ENCODE measurements at regions of chr7 and their contacts with region 1.

Region 1: DNA sequence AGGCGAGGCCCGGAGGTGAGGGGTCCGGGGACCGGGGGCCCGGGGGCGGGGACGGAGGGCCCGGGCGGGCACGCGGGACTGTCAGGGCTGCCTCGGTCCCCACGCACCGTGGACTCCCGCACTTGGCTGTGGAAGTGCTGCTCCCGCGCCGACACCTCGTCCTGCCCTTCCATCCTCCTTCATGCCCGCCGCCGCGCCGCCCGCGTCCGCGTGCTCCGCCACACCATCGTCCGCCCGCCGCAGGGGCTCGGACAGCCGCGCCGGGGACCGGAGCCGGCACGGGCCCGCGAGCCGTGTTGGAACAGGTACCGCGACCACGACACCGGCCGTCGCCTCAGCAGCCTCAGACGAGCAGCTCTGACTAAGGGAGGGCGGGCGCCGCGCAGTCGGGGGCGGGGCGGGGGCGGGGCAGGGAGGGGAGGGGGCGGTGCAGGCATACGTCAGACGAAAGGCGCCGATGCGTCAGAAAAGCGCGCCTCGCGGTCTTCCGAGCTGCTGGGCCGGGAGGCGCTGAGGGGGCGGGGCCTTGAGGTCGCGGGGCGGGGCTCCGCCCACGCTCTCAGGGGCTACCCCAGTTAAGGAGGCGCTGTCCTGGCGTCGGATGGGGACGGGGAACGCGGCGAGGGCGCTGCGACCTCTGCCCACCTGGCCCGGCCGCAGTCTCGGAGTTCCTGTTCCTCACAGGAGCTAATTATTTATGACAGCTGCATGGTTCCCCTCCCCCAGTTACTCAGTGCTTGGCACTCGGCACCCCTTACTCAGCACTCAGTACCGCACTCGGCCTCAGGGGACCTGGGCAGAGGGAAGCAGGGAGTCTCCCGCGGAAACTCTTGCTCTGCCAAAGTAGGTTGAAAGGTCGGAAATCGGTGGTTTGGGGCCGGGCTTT is at the start of gene LMBR1:
- DNase-seq: peak; percentile 91
- H3K4me3 Mint-ChIP-seq: peak within 1 kb of the TSS; percentile 94
- H3K27ac Mint-ChIP-seq: peak within 1 kb of the TSS; percentile 93
- H3K4me1 Mint-ChIP-seq: peaks cover 46% of the 10 kb centered on the region
- H3K27me3 Mint-ChIP-seq: no peaks in the 10 kb centered on the region
- total RNA-seq, gene LMBR1: 60.5 and 61.7 TPM in 2 replicates

Region 2: DNA sequence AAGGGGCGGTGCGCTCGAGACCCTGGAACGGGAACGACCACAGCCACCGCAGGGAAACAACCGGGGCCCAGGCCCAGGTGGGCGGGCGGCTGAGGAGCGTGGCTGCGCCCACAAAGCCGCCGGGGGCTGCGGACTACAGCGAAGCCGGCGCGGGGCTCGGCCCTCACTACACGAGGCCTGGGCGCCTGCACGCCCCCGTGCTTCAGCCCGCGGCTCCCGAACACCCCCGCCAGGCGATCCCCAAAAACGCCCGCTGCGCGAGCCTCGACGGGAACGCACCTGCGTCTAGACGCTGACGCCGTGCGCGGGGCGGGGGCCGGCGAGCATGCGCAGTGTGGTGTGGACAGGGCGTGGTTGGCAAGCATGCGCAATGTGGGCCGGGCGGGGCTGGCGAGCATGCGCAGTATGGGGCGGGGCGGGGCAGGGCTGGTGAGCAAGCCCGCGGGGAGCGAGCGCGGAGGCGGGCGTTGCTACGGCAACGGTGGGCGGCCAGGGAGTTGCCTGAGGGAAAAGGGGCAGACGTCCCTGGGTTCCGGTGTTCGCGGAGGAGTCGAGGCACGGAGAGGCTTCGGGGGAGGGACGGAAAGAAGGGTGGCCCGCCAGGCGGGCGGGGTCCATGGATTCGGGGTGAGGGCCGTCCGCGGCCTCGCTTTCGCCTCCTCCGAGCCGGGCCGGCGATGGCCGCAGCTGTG is 252.7 kb before region 1 on chr7 and contains the start of gene RNF32:
- intact Hi-C with region 1: loop called (anchors 2 kb)
- DNase-seq: peak; percentile 95
- H3K4me3 Mint-ChIP-seq: peak within 1 kb of the TSS; percentile 97
- H3K27ac Mint-ChIP-seq: peak within 1 kb of the TSS; percentile 100
- H3K4me1 Mint-ChIP-seq: peaks cover 36% of the 10 kb centered on the region
- H3K27me3 Mint-ChIP-seq: no peaks in the 10 kb centered on the region
- total RNA-seq, gene RNF32: 2.9 and 3.4 TPM in 2 replicates

Region 3: DNA sequence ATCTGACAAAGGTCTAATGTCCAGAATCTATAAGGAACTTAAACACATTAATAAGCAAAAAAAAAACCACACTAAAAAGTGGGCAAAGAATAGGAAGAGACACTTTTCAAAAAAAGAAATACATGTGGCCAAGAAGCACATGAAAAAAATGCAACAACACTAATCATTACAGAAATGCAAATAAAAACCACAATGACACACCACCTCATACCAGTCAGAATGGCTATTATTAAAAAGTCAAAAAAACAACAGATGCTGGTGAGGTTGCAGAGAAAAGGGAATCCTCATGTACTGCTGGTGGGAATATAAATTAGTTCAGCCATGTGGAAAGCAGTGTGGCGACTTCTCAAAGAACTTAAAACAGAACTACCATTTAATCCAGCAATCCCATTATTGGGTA is 119.1 kb before region 1 on chr7:
- intact Hi-C with region 1: loop called (anchors 1 kb)
- DNase-seq: no peak
- H3K4me3 Mint-ChIP-seq: no peak overlapping the region
- H3K27ac Mint-ChIP-seq: peak overlapping the region; percentile 73
- H3K4me1 Mint-ChIP-seq: peaks cover 61% of the 10 kb centered on the region
- H3K27me3 Mint-ChIP-seq: no peaks in the 10 kb centered on the region

Region 4: GRCh38 chr7:156927571-156928405 is 34.7 kb after region 1 on chr7:
- intact Hi-C with region 1: loop called (anchors 1 kb)
- DNase-seq: no peak
- H3K4me3 Mint-ChIP-seq: no peak overlapping the region
- H3K27ac Mint-ChIP-seq: no peak overlapping the region
- H3K4me1 Mint-ChIP-seq: peaks cover 27% of the 10 kb centered on the region
- H3K27me3 Mint-ChIP-seq: peaks cover 52% of the 10 kb centered on the region

Region 5: GRCh38 chr7:157138424-157139110 is 245.5 kb after region 1 on chr7 and contains the start of gene UBE3C:
- intact Hi-C with region 1: loop called (anchors 1 kb)
- DNase-seq: peak; percentile 89
- H3K4me3 Mint-ChIP-seq: peak within 1 kb of the TSS; percentile 87
- H3K27ac Mint-ChIP-seq: peak within 1 kb of the TSS; percentile 96
- H3K4me1 Mint-ChIP-seq: peaks cover 32% of the 10 kb centered on the region
- H3K27me3 Mint-ChIP-seq: no peaks in the 10 kb centered on the region
- total RNA-seq, gene UBE3C: 84.9 and 85.7 TPM in 2 replicates

Region 6: GRCh38 chr7:157425079-157425731 is 532.1 kb after region 1 on chr7:
- intact Hi-C with region 1: no loop called
- DNase-seq: no peak
- H3K4me3 Mint-ChIP-seq: no peak overlapping the region
- H3K27ac Mint-ChIP-seq: no peak overlapping the region
- H3K4me1 Mint-ChIP-seq: no peaks in the 10 kb centered on the region
- H3K27me3 Mint-ChIP-seq: no peaks in the 10 kb centered on the region